Activated B cell treated with CpG ODN at 0.5 μM for 24 hours (primary cell): ENCODE measurements at regions of chr11 and their contacts with region 1.

Region 1: GRCh38 chr11:32176223-32176934 is 85.5 kb downstream of the RCN1 start:
- DNase-seq: peak; percentile 39
- ATAC-seq: peak; percentile 75
- H3K4me3 Mint-ChIP-seq: no peak overlapping the region
- H3K27ac Mint-ChIP-seq: no peak overlapping the region
- H3K4me1 Mint-ChIP-seq: no peaks in the 10 kb centered on the region
- H3K27me3 Mint-ChIP-seq: peaks cover 5% of the 10 kb centered on the region
- CTCF ChIP-seq: no peak

Region 2: GRCh38 chr11:31240338-31240904 is 936.0 kb before region 1 on chr11:
- CTCF ChIA-PET with region 1: interaction called, 12 read pairs
- POLR2A ChIA-PET with region 1: no interaction called
- intact Hi-C with region 1: loop called (anchors 1 kb)
- DNase-seq: no peak
- ATAC-seq: no peak
- H3K4me3 Mint-ChIP-seq: no peak overlapping the region
- H3K27ac Mint-ChIP-seq: no peak overlapping the region
- H3K4me1 Mint-ChIP-seq: no peaks in the 10 kb centered on the region
- H3K27me3 Mint-ChIP-seq: no peaks in the 10 kb centered on the region
- CTCF ChIP-seq: no peak

Region 3: GRCh38 chr11:31397239-31397834 is 779.0 kb before region 1 on chr11:
- CTCF ChIA-PET with region 1: no interaction called
- POLR2A ChIA-PET with region 1: no interaction called
- intact Hi-C with region 1: loop called (anchors 1 kb)
- DNase-seq: no peak
- ATAC-seq: no peak
- H3K4me3 Mint-ChIP-seq: no peak overlapping the region
- H3K27ac Mint-ChIP-seq: no peak overlapping the region
- H3K4me1 Mint-ChIP-seq: no peaks in the 10 kb centered on the region
- H3K27me3 Mint-ChIP-seq: no peaks in the 10 kb centered on the region
- CTCF ChIP-seq: peak; percentile 28

Region 4: GRCh38 chr11:32006799-32007388 is 169.5 kb before region 1 on chr11:
- CTCF ChIA-PET with region 1: interaction called, 6 read pairs
- POLR2A ChIA-PET with region 1: no interaction called
- intact Hi-C with region 1: loop called (anchors 1 kb)
- DNase-seq: no peak
- ATAC-seq: peak; percentile 64
- H3K4me3 Mint-ChIP-seq: no peak overlapping the region
- H3K27ac Mint-ChIP-seq: no peak overlapping the region
- H3K4me1 Mint-ChIP-seq: no peaks in the 10 kb centered on the region
- H3K27me3 Mint-ChIP-seq: peaks cover 24% of the 10 kb centered on the region
- CTCF ChIP-seq: no peak

Region 5: DNA sequence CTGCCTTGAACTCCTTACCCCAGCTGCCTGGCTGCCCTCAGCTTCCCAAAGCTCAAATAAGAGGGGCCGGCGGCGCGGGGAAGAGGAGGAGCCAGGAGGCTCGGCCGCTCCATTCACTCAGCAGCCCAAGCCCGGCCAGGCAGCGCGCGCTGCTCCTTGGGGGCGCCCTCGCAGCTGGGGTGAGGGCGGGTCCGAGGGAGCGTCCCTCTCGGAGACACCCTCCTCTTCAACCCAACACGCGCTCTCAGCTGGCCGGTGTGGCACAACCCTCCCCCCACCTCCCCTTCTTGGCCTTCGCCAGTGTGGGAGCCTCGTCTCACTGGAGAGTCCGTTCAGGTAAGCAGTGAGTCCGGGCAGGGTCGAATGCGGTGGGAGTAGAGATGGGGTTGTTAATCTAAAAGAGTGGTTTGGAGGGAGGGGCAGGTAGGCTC is 259.1 kb after region 1 on chr11 and contains the start of gene WT1:
- CTCF ChIA-PET with region 1: no interaction called
- POLR2A ChIA-PET with region 1: no interaction called
- intact Hi-C with region 1: no loop called
- DNase-seq: no peak
- ATAC-seq: no peak
- H3K4me3 Mint-ChIP-seq: peak within 1 kb of the TSS; percentile 5
- H3K27ac Mint-ChIP-seq: no peak within 1 kb of the TSS
- H3K4me1 Mint-ChIP-seq: peaks cover 16% of the 10 kb centered on the region
- H3K27me3 Mint-ChIP-seq: peaks cover 66% of the 10 kb centered on the region
- CTCF ChIP-seq: no peak
- total RNA-seq, gene WT1: not detected in 2 replicates

Region 6: DNA sequence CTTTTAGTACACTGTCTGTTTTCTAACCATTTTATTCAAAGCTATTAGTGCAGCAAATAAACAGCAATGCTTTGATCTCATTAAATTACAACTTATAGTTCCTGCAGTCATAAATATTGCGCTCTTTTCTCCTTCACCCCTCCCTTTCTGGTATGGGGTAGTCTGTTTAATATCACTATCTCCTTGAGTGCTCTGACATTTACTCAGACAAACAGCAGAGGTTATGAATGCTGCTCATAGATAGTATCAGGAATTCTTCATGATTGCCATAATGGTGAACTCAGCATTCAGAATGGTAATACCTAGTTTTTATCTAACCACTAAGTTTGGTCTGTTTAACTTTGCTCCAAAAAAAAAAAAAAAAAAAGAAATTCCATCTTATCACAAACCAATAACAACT is 494.7 kb after region 1 on chr11:
- CTCF ChIA-PET with region 1: no interaction called
- POLR2A ChIA-PET with region 1: no interaction called
- intact Hi-C with region 1: no loop called
- DNase-seq: no peak
- ATAC-seq: no peak
- H3K4me3 Mint-ChIP-seq: no peak overlapping the region
- H3K27ac Mint-ChIP-seq: no peak overlapping the region
- H3K4me1 Mint-ChIP-seq: no peaks in the 10 kb centered on the region
- H3K27me3 Mint-ChIP-seq: peaks cover 2% of the 10 kb centered on the region
- CTCF ChIP-seq: no peak